ENCODE measurements at regions of chr14 and their contacts with region 1.

Region 1: GRCh38 chr14:104826189-104826860 is 25.4 kb downstream of the ZBTB42 start:
- DNase-seq: peak; percentile 95
- H3K4me3 ChIP-seq: peak overlapping the region; percentile 39 to 74 (median 53)
- H3K27ac ChIP-seq: peak overlapping the region; percentile 57 to 65 (median 61)
- H3K4me1 ChIP-seq: peaks cover 12 to 26% (median 23%) of the 10 kb centered on the region in 4 donors
- H3K27me3 ChIP-seq: no peaks in the 10 kb centered on the region
- CTCF ChIP-seq: peak; percentile 40 to 95 (median 82)
- EP300 ChIP-seq: no peak
- POLR2A ChIP-seq: no peak

Region 2: GRCh38 chr14:104768437-104769323 is 57.6 kb before region 1 on chr14:
- in situ Hi-C with region 1: loop called (anchors 5 to 10 kb)
- intact Hi-C with region 1: loop called (anchors 5 kb)
- DNase-seq: peak; percentile 93
- H3K4me3 ChIP-seq: no peak overlapping the region
- H3K27ac ChIP-seq: peak overlapping the region in 3 of 4 donors; percentile 18 to 36 (median 19)
- H3K4me1 ChIP-seq: peaks cover 0 to 10% (median 7%) of the 10 kb centered on the region in 4 donors
- H3K27me3 ChIP-seq: no peaks in the 10 kb centered on the region
- CTCF ChIP-seq: peak; percentile 83 to 97 (median 90)
- EP300 ChIP-seq: no peak
- POLR2A ChIP-seq: no peak